Activated T-helper 1 cell treated with anti-CD3 and anti-CD28 coated beads, Interleukin-12 subunit alpha, Interleukin-12 subunit beta, Interleukin-2, Interleukin-4 antibody, amounts not matched to agents 30 ng/mL and 10 ng/mL and 1 ng/mL, durations not matched to agents 14 hours and 24 hours and 36 hours (primary cell): ENCODE measurements at regions of chrX and their contacts with region 1.

Region 1: DNA sequence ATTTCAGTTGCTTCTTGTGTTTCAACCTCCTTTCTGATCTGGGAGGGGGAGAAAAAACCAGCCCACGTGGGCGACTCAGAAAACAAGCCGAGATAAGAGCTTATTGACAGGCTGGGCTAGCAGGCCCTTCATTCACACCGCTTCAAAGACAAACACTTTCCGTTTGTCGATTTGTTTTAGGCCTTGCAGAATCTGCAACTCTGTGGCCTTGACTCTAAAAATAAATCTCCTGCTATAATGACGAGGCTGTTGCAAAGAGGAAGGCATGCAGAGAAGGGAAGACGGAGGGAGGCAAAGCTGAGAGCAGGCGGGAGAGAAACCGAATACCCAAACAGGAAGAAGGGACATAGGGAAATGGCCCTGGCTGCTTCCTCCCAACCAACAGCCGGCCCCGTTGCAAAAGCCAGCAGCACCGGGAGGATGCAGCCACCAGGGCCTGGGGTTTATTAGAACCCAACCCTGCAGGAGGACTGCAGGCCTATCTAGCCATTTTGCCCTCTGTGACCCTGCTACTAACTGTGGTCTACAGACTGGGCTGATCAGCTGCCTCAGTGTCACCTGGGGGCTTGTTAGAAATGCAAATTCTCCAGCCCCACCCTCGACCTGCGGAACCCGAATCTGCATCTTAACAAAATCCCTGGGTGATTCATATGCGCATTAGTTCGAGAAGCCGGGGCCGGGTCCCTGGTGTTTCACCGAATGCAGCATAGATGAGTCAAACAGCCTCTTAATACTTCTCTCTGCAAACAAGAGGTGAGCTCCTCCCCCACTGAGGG is 325.5 kb downstream of the BCOR start:
- DNase-seq: peak; percentile 22
- H3K4me3 Mint-ChIP-seq: peak overlapping the region; percentile 73
- H3K27ac Mint-ChIP-seq: peak overlapping the region; percentile 98
- H3K4me1 Mint-ChIP-seq: peaks cover 48% of the 10 kb centered on the region
- H3K27me3 Mint-ChIP-seq: no peaks in the 10 kb centered on the region

Region 2: DNA sequence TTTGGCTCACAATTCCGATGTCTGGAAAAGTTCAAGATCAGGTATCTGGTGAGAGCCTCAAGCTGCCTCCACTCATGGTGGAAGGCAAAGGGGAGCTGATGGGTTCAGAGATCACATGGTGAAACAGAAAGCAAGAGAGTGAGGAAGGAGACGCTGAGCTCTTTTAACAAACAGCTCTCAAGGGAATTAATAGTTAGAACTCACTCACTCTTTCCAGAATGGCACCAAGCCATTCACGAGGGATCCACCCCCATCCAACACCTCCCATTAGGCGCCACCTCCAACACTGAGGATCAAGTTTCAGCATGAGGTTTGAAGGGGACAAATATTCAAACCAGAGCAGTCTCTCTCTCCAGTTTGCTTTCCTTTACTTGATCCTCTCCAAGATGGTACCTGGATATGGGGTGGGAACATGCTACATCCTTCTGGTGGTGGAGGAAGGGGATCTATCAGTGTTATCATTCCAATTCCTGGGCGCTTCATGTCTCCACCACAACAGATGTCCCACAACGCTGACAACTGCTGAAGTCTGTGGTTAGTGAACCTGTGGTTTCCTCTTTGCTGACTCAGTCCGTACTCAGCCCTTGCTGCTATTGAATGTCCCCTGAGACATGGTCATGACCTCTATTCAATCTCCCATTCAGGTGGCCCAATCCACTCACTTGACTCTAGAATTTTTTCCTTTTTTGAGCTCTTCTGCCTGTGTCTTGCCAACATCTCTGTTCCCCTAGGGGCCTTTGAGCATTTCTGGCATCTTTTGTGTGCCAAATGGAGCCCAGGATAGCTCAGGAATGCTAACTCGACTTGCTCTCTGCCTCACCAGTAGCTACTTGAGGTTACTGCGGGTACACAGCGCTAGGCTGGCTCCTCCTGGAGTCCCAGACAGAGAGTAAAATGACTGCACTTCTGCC is 575.8 kb before region 1 on chrX:
- intact Hi-C with region 1: loop called (anchors 5 kb)
- DNase-seq: peak; percentile 44
- H3K4me3 Mint-ChIP-seq: peak overlapping the region; percentile 58
- H3K27ac Mint-ChIP-seq: peak overlapping the region; percentile 87
- H3K4me1 Mint-ChIP-seq: peaks cover 52% of the 10 kb centered on the region
- H3K27me3 Mint-ChIP-seq: no peaks in the 10 kb centered on the region

Region 3: DNA sequence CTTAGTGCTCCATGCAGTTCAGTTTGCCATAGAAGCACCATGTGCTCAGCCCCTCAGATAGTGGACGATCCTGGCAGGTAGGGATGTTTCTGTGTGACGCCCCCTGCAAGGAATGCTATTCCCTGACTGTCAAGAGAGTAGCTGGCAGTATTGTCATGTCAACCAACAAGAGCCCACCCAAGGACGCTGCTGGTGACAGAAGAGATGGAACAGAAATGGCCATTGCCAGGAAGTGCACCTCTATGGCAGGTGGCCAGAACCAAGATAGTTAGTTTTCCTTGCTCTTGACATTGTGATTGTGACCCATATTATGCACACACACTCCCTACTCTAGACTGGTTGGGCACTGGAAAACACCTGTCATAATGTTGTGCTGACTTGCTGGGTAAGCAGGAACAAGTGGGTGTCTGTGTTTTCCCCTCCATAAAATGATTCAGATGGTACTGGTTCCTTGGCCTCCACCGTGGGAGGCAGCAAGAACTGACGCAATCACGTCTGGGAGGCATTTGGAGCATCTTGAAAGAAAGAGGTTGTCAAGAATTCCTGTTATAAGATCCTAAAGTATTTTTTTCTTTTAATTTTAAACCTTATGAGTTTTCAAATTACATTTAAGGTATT is 463.1 kb before region 1 on chrX:
- intact Hi-C with region 1: loop called (anchors 2 kb)
- DNase-seq: peak; percentile 3
- H3K4me3 Mint-ChIP-seq: peak overlapping the region; percentile 58
- H3K27ac Mint-ChIP-seq: peak overlapping the region; percentile 100
- H3K4me1 Mint-ChIP-seq: peaks cover 67% of the 10 kb centered on the region
- H3K27me3 Mint-ChIP-seq: no peaks in the 10 kb centered on the region

Region 4: DNA sequence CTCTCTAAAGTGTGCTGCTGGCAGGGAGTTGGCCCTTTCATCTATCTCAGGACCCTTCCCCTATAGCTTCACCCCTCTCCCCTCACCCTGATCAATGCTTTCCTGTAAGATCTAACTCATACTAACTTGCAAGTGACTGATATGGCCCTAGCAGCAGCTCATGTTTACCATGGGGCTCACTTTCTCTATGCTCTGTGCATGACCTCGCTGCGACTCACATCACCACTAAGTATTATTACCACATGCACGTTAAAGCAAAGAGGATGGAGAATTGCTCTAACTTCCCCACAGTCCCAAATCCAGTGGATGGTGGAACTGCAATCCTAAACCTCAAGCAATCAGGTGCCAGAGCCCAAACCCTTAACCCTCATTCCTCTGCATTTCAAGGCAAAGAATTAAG is 344.3 kb before region 1 on chrX:
- intact Hi-C with region 1: loop called (anchors 1 kb)
- DNase-seq: no peak
- H3K4me3 Mint-ChIP-seq: no peak overlapping the region
- H3K27ac Mint-ChIP-seq: peak overlapping the region; percentile 98
- H3K4me1 Mint-ChIP-seq: peaks cover 58% of the 10 kb centered on the region
- H3K27me3 Mint-ChIP-seq: no peaks in the 10 kb centered on the region

Region 5: GRCh38 chrX:39578354-39578869 is 193.8 kb before region 1 on chrX:
- intact Hi-C with region 1: loop called (anchors 1 kb)
- DNase-seq: peak; percentile 16
- H3K4me3 Mint-ChIP-seq: peak overlapping the region; percentile 59
- H3K27ac Mint-ChIP-seq: peak overlapping the region; percentile 82
- H3K4me1 Mint-ChIP-seq: peaks cover 28% of the 10 kb centered on the region
- H3K27me3 Mint-ChIP-seq: no peaks in the 10 kb centered on the region

Region 6: GRCh38 chrX:39814391-39814790 is 42.1 kb after region 1 on chrX:
- intact Hi-C with region 1: loop called (anchors 2 kb)
- DNase-seq: peak; percentile 8
- H3K4me3 Mint-ChIP-seq: no peak overlapping the region
- H3K27ac Mint-ChIP-seq: no peak overlapping the region
- H3K4me1 Mint-ChIP-seq: peaks cover 42% of the 10 kb centered on the region
- H3K27me3 Mint-ChIP-seq: no peaks in the 10 kb centered on the region

Region 7: GRCh38 chrX:39836802-39837420 is 64.7 kb after region 1 on chrX:
- intact Hi-C with region 1: no loop called
- DNase-seq: no peak
- H3K4me3 Mint-ChIP-seq: no peak overlapping the region
- H3K27ac Mint-ChIP-seq: no peak overlapping the region
- H3K4me1 Mint-ChIP-seq: no peaks in the 10 kb centered on the region
- H3K27me3 Mint-ChIP-seq: peaks cover 3% of the 10 kb centered on the region

Region 8: GRCh38 chrX:40169193-40170101 is 397.2 kb after region 1 on chrX:
- intact Hi-C with region 1: loop called (anchors 2 kb)
- DNase-seq: peak; percentile 73
- H3K4me3 Mint-ChIP-seq: peak overlapping the region; percentile 88
- H3K27ac Mint-ChIP-seq: peak overlapping the region; percentile 96
- H3K4me1 Mint-ChIP-seq: peaks cover 62% of the 10 kb centered on the region
- H3K27me3 Mint-ChIP-seq: no peaks in the 10 kb centered on the region